ENCODE measurements at regions of chr18 and their contacts with region 1.

Region 1: DNA sequence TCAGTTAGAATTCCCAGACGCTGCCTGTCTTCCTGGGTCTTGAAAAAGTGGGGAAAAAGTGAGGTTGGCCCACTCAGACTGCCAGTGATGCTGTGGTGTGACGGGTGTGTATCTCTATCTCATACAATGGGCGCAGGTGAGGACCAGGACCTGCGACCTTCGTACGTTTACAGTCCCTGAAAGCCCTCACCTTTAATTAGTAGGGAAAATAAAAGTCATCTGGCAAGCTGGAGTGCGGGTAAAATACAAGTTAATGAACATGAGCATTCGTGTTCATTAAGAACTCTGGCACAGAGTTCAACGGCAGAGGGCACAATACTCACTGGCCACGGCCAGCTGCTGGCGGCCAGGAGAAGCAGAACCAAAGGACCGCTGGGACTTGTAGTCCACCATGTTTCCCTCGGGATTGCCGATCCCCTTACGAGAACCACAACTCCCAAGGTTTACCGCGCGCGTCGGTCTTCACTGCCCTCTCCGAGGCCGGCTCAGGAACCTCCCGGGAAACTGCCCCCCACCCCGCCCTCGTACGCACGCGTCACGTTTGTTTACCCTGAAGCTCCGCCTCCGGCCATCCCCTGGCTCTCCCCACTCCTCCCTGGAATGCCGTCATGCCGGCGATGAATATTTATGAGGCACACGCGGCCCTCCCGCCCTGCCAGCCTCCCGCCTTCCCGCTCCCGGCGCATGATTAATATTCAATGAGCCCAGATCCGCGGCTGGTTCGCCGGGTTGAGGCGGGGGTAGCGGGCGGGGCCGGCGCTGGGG is 488 bp upstream of the PHLPP1 start:
- DNase-seq: peak; percentile 81 to 96
- ATAC-seq: peak; percentile 68 to 82 (median 71)
- H3K4me3 ChIP-seq: peak overlapping the region; percentile 86
- H3K4me3 Mint-ChIP-seq: peak overlapping the region; percentile 89
- H3K27ac ChIP-seq: peak overlapping the region; percentile 92
- H3K27ac Mint-ChIP-seq: peak overlapping the region; percentile 92 to 94
- H3K4me1 ChIP-seq: peaks cover 13% of the 10 kb centered on the region
- H3K4me1 Mint-ChIP-seq: peaks cover 29 to 31% of the 10 kb centered on the region in 2 donors
- H3K27me3 ChIP-seq: no peaks in the 10 kb centered on the region
- H3K27me3 Mint-ChIP-seq: no peaks in the 10 kb centered on the region
- CTCF ChIP-seq: peak; percentile 80

Region 2: DNA sequence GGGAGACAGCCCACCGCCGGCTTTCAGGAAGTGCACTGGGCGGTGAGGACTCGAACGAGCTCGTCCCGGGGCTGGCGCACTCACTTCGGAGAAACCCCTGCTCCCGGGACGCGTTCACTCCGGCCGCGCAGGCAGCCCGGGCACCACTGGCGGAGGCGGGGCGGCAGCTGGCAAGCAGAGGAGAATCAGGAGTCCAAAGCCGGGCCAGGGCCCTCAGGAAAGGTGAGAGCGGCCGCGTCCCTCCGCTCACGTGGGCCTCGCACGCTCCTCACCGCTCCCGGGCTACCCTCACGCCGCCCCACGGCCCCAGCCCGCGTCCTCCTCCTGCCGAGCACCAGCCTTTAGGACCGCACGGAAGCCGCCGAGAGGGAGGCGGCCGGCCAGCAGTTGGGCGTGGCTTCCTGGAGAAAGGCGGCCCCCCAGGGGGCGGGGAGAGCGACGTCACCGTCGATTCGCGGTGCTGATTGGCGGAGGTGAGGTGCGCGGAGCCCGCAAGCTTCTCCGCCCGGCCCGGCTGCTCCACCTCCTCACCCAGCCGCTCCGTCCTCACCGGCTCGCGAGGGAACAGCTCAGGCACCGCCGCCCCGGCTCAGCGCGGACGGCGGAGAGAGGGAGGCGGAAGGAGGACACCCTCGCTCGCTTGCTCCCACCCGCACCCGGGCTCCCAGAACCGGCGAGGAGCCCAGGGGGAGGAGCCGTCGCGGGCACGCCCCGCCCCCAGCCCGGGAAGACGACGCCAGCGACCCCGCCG is 192.2 kb before region 1 on chr18 and contains the start of gene ZCCHC2:
- intact Hi-C with region 1: loop called (anchors 10 kb)
- DNase-seq: peak; percentile 99
- ATAC-seq: peak; percentile 78 to 91 (median 81)
- H3K4me3 ChIP-seq: peak within 1 kb of the TSS; percentile 82
- H3K4me3 Mint-ChIP-seq: peak within 1 kb of the TSS; percentile 91
- H3K27ac ChIP-seq: peak within 1 kb of the TSS; percentile 91
- H3K27ac Mint-ChIP-seq: peak within 1 kb of the TSS; percentile 89 to 93
- H3K4me1 ChIP-seq: peaks cover 16% of the 10 kb centered on the region
- H3K4me1 Mint-ChIP-seq: peaks cover 23 to 28% of the 10 kb centered on the region in 2 donors
- H3K27me3 ChIP-seq: no peaks in the 10 kb centered on the region
- H3K27me3 Mint-ChIP-seq: peaks cover 0 to 7% of the 10 kb centered on the region in 2 donors
- CTCF ChIP-seq: no peak
- total RNA-seq, gene ZCCHC2: 50.4 to 81.2 (median 59.6) TPM

Region 3: DNA sequence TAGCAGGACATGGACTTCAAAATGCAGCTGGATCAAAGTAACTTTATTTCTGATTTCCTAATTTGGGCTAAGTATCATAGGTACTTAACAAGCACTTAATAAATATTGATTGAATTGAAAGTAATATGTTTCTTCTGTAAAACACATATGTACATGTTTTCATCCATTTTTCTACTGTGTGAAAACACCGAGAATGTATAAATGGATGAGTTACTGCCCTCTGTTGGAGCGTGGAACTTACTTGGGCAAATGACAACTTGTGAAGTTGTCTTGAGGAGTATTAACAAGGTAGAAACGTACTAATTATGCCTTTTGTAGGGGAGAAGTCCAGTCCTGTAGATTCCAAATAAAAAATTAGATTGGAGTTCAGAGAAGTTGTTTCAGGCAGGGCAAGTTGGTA is 87.7 kb after region 1 on chr18:
- intact Hi-C with region 1: loop called (anchors 5 kb)
- DNase-seq: peak in 1 of 2 donors; percentile 20
- ATAC-seq: no peak
- H3K4me3 ChIP-seq: no peak overlapping the region
- H3K4me3 Mint-ChIP-seq: no peak overlapping the region
- H3K27ac ChIP-seq: no peak overlapping the region
- H3K27ac Mint-ChIP-seq: no peak overlapping the region
- H3K4me1 ChIP-seq: no peaks in the 10 kb centered on the region
- H3K4me1 Mint-ChIP-seq: peaks cover 12 to 16% of the 10 kb centered on the region in 2 donors
- H3K27me3 ChIP-seq: no peaks in the 10 kb centered on the region
- H3K27me3 Mint-ChIP-seq: no peaks in the 10 kb centered on the region
- CTCF ChIP-seq: no peak

Region 4: GRCh38 chr18:62982600-62983251 is 267.9 kb after region 1 on chr18:
- intact Hi-C with region 1: loop called (anchors 1 kb)
- DNase-seq: peak in 1 of 2 donors; percentile 80
- ATAC-seq: peak in 2 of 3 donors; percentile 68 to 74
- H3K4me3 ChIP-seq: no peak overlapping the region
- H3K4me3 Mint-ChIP-seq: peak overlapping the region; percentile 64
- H3K27ac ChIP-seq: no peak overlapping the region
- H3K27ac Mint-ChIP-seq: no peak overlapping the region
- H3K4me1 ChIP-seq: peaks cover 5% of the 10 kb centered on the region
- H3K4me1 Mint-ChIP-seq: peaks cover 7 to 8% of the 10 kb centered on the region in 2 donors
- H3K27me3 ChIP-seq: no peaks in the 10 kb centered on the region
- H3K27me3 Mint-ChIP-seq: no peaks in the 10 kb centered on the region
- CTCF ChIP-seq: peak; percentile 72

Region 5: GRCh38 chr18:63422087-63422809 is 707.4 kb after region 1 on chr18 and contains the start of gene VPS4B:
- intact Hi-C with region 1: loop called (anchors 5 kb)
- DNase-seq: peak; percentile 100
- ATAC-seq: peak; percentile 93 to 98 (median 94)
- H3K4me3 ChIP-seq: peak within 1 kb of the TSS; percentile 96
- H3K4me3 Mint-ChIP-seq: peak within 1 kb of the TSS; percentile 96
- H3K27ac ChIP-seq: peak within 1 kb of the TSS; percentile 85
- H3K27ac Mint-ChIP-seq: peak within 1 kb of the TSS; percentile 97
- H3K4me1 ChIP-seq: peaks cover 13% of the 10 kb centered on the region
- H3K4me1 Mint-ChIP-seq: peaks cover 19 to 28% of the 10 kb centered on the region in 2 donors
- H3K27me3 ChIP-seq: no peaks in the 10 kb centered on the region
- H3K27me3 Mint-ChIP-seq: peaks cover 3 to 5% of the 10 kb centered on the region in 2 donors
- CTCF ChIP-seq: no peak
- total RNA-seq, gene VPS4B: 101 to 128 (median 107) TPM